ENCODE measurements at regions of chr11 and their contacts with region 1.

Region 1: DNA sequence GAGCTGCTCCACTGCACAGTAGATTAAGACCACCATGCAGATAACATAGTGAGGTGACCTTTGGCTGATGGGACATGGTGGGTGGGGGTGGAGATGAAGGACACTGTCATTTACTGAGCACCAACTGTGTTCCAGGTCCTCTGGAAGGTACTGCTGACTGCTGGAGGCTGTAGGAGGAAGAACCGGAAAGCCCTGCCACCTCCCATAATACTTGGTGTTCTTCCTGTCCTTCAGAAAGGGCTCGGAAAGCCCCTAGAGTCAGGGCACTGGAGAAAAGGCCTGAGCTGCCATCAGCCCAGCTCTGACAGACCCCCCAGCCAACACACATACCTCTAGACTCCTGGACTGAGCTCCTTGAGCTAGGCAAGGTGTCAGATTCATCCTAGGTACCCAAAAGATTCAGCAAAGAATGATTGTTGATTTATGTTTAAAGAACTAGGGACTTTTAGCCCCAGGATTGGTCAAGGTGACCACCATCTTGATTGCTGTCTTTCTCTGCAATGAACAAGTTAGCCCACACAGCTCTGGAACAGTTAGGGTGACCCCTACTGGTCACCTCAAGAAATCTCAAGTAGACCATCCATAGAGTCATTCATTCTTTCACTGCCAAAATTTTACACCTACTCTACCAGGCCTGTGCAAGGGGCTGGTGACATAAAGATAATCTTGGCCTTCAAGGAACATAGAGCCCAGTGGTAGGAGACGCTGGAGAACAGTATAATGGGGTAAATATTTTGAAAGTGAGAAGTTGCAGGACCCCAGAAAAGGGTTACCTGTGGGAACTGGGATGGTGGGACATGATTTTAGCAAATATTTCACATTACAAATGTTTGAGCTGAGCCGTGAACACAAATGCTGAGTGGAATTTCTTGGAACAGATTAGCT is 39.4 kb downstream of the IRAG1 start:
- DNase-seq: peak; percentile 48
- H3K4me3 Mint-ChIP-seq: no peak overlapping the region
- H3K27ac Mint-ChIP-seq: no peak overlapping the region
- H3K4me1 Mint-ChIP-seq: peaks cover 31% of the 10 kb centered on the region
- H3K27me3 Mint-ChIP-seq: no peaks in the 10 kb centered on the region
- CTCF ChIP-seq: peak; percentile 40

Region 2: GRCh38 chr11:10514210-10514609 is 140.0 kb before region 1 on chr11:
- CTCF ChIA-PET with region 1: interaction called, 5 read pairs
- intact Hi-C with region 1: loop called (anchors 1 kb)
- DNase-seq: no peak
- H3K4me3 Mint-ChIP-seq: no peak overlapping the region
- H3K27ac Mint-ChIP-seq: no peak overlapping the region
- H3K4me1 Mint-ChIP-seq: no peaks in the 10 kb centered on the region
- H3K27me3 Mint-ChIP-seq: no peaks in the 10 kb centered on the region
- CTCF ChIP-seq: peak; percentile 19

Region 3: GRCh38 chr11:10592331-10592730 is 61.8 kb before region 1 on chr11:
- CTCF ChIA-PET with region 1: no interaction called
- intact Hi-C with region 1: no loop called
- DNase-seq: no peak
- H3K4me3 Mint-ChIP-seq: no peak overlapping the region
- H3K27ac Mint-ChIP-seq: peak overlapping the region; percentile 87
- H3K4me1 Mint-ChIP-seq: peaks cover 40% of the 10 kb centered on the region
- H3K27me3 Mint-ChIP-seq: no peaks in the 10 kb centered on the region
- CTCF ChIP-seq: no peak

Region 4: GRCh38 chr11:10701982-10702381 is 47.8 kb after region 1 on chr11:
- CTCF ChIA-PET with region 1: no interaction called
- intact Hi-C with region 1: no loop called
- DNase-seq: no peak
- H3K4me3 Mint-ChIP-seq: no peak overlapping the region
- H3K27ac Mint-ChIP-seq: no peak overlapping the region
- H3K4me1 Mint-ChIP-seq: no peaks in the 10 kb centered on the region
- H3K27me3 Mint-ChIP-seq: peaks cover 16% of the 10 kb centered on the region
- CTCF ChIP-seq: no peak

Region 5: DNA sequence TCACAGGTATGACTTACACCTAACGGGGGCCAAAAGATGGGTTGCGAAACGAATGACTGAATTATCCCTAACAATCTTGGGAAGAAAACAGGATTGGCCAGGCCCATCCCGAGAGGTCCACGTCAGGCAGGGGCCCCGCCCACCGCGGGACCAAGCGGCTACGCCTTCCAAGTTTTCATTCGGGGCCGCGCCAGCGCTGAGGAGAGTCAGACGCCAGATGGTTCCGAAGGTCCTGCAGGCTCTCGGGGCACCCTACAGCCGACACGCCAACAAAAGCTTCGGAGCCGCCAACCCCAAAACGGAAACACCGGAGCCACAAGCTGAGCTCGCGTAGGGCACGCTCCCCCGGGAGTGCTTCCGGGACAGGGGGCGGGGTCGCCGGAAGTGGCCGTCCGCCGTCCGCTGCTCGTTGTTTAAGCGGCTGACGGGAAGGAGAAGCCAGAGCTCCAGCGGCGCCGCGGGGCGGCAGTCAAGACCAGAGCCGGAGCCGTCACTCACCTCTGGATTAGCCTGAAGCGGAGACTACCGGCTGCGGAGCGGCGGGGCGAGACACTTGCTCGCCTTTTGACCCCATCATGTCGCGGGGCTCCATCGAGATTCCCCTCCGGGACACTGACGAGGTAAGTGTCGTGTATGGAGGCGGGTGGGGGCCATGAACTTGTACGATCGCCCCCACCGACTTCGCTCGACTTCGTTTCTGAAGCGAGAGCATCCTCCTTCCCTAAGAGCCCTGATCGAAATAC is 96.8 kb after region 1 on chr11 and contains the start of gene CTR9:
- CTCF ChIA-PET with region 1: no interaction called
- intact Hi-C with region 1: no loop called
- DNase-seq: peak; percentile 95
- H3K4me3 Mint-ChIP-seq: peak within 1 kb of the TSS; percentile 94
- H3K27ac Mint-ChIP-seq: peak within 1 kb of the TSS; percentile 87
- H3K4me1 Mint-ChIP-seq: peaks cover 19% of the 10 kb centered on the region
- H3K27me3 Mint-ChIP-seq: no peaks in the 10 kb centered on the region
- CTCF ChIP-seq: no peak
- total RNA-seq, gene CTR9: 31.4 and 34.0 TPM in 2 replicates

Measured in Calu3 (cell line).